Sciatic nerve (tissue), 2 donors: ENCODE measurements at regions of chr22 and their contacts with region 1.

Region 1: DNA sequence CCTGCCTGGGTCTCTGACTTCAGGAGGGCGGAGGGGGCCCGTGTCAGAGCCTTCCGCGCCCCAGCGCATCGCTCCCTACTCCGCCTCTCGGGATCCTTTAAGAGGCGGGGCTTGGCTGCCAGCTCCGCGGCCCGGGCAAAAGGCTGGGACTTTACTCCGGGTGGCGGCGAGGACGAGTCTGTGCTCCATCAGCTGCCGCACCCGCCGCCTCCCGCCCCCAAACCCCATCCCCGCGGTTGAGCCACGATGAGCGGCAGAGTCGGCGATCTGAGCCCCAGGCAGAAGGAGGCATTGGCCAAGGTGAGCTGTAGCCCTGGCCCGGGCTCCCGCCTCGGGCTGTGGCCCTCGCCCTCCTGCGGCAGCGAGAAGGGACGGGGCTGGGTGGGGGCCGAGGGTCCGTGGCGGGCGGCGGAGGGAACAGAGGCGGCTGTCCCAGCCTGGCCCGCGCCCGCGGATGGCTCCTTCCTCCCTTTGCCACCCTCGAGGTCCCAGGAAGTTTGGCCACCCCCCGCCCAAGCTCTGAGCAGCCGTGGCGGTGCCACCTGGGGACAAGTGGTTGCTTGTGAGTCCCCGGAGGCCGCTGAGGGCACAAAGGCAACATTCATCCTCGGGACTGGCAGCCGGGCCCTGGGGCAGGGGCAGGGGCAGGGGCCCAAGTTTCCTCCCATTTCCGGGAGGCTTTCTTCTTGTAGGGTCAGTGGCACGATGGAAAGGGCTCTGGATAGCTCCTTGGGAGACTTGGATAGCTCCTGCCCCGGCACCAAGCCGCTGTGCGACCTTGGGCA is at the start of gene SEC14L2:
- DNase-seq: peak; percentile 84
- ATAC-seq: peak; percentile 69
- total RNA-seq, gene SEC14L2: 20.8 TPM

Region 2: GRCh38 chr22:30423982-30424963 is 27.2 kb after region 1 on chr22:
- intact Hi-C with region 1: loop called (anchors 2 kb)
- DNase-seq: peak; percentile 99
- ATAC-seq: peak; percentile 97

Region 3: GRCh38 chr22:30490399-30490798 is 93.3 kb after region 1 on chr22:
- intact Hi-C with region 1: loop called (anchors 5 kb)
- DNase-seq: no peak
- ATAC-seq: no peak

Region 4: GRCh38 chr22:32185821-32186220 is 1788.8 kb after region 1 on chr22:
- intact Hi-C with region 1: no loop called
- DNase-seq: no peak
- ATAC-seq: no peak